ENCODE measurements at regions of chr18 and their contacts with region 1.

Region 1: GRCh38 chr18:13800505-13801259 is 23.3 kb upstream of the MC5R start:
- DNase-seq: peak; percentile 56 to 78
- ATAC-seq: peak; percentile 90 to 96 (median 92)
- H3K4me3 ChIP-seq: peak overlapping the region in 7 of 10 donors; percentile 17 to 41 (median 30)
- H3K27ac ChIP-seq: no peak overlapping the region
- H3K4me1 ChIP-seq: peaks cover 0 to 20% (median 4%) of the 10 kb centered on the region in 9 donors
- H3K27me3 ChIP-seq: peaks cover 0 to 45% (median 4%) of the 10 kb centered on the region in 7 donors
- CTCF ChIP-seq: peak; percentile 22 to 69 (median 56)

Region 2: GRCh38 chr18:13095466-13095865 is 705.2 kb before region 1 on chr18:
- intact Hi-C with region 1: no loop called
- DNase-seq: no peak
- ATAC-seq: no peak
- H3K4me3 ChIP-seq: no peak overlapping the region
- H3K27ac ChIP-seq: no peak overlapping the region
- H3K4me1 ChIP-seq: peaks cover 0 to under 1% (median 0%) of the 10 kb centered on the region in 9 donors
- H3K27me3 ChIP-seq: no peaks in the 10 kb centered on the region
- CTCF ChIP-seq: no peak

Region 3: DNA sequence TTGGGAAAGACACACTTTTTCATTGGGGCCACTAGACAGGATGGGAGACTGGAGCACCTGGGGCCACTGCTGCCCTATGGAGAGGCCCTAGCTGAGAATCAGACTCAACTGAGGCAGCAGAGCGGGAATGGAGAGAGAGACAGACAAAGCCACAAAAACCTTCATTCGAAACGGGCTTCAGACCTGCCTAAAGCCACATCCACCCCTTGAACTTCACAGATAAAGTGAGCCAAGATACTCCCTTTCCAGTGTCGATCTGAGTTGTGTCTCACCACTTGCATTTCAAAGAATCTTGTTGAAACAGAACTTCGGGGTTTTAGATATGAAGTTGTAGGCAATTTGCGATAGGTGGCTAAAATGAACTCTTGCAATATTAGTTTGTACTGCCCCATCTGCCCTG is 593.4 kb before region 1 on chr18:
- intact Hi-C with region 1: loop called in 3 of 10 experiments (anchors 10 kb)
- DNase-seq: no peak
- ATAC-seq: no peak
- H3K4me3 ChIP-seq: no peak overlapping the region
- H3K27ac ChIP-seq: no peak overlapping the region
- H3K4me1 ChIP-seq: peaks cover 0 to 4% (median 0%) of the 10 kb centered on the region in 9 donors
- H3K27me3 ChIP-seq: no peaks in the 10 kb centered on the region
- CTCF ChIP-seq: no peak

Region 4: DNA sequence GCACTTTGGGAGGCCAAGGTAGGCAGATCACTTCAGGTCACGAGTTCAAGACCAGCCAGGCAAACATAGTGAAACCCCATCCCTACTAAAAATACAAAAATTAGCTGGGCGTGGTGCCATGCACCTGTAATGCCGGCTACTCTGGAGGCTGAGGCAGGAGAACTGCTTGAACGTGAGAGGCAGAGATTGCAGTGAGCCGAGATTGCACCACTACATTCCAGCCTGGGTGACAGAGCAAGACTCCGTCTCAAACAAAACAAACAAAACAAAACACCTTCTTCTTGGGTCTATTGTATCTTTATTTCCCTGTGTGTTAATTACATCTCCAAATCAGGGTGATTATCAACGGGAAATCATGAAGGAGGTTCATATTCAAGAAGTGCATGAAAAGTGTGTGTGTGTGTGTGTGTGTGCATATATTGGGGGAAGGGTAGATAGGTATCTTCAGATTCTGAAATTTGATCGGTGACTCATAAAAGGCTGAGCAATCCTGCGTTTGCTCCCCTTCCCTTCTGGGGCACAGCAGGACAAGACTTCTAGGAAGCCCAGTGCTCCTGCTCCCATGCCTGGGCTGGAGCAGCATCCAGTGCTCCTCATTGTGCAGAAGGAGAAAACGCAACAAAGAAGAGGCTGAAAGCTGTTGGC is 49.0 kb after region 1 on chr18:
- intact Hi-C with region 1: loop called in 1 of 10 experiments (anchors 10 kb)
- DNase-seq: no peak
- ATAC-seq: no peak
- H3K4me3 ChIP-seq: no peak overlapping the region
- H3K27ac ChIP-seq: no peak overlapping the region
- H3K4me1 ChIP-seq: no peaks in the 10 kb centered on the region
- H3K27me3 ChIP-seq: no peaks in the 10 kb centered on the region
- CTCF ChIP-seq: no peak

Region 5: GRCh38 chr18:13923221-13923620 is 122.5 kb after region 1 on chr18:
- intact Hi-C with region 1: no loop called
- DNase-seq: no peak
- ATAC-seq: no peak
- H3K4me3 ChIP-seq: no peak overlapping the region
- H3K27ac ChIP-seq: no peak overlapping the region
- H3K4me1 ChIP-seq: no peaks in the 10 kb centered on the region
- H3K27me3 ChIP-seq: peaks cover 0 to 16% (median 5%) of the 10 kb centered on the region in 7 donors
- CTCF ChIP-seq: no peak

Region 6: DNA sequence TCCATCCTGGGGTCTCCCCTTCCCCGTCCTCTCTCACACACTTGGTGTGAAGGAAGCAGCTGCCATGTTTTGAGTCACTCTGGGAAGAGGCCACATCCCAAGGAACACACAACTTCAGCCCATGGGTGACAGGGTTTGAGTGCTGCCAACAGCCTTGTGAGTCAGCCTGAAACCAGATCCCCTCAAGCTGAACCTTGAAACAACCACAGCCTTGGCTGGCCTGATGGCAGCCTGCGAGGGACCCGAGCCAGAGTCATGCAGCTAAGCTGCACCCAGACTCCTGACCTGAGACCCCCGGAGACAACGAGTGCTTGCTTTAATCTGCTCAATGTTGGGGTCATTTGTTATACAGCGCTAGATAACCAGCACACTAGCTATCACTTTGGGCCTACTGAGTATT is 134.0 kb after region 1 on chr18:
- intact Hi-C with region 1: no loop called
- DNase-seq: no peak
- ATAC-seq: no peak
- H3K4me3 ChIP-seq: no peak overlapping the region
- H3K27ac ChIP-seq: no peak overlapping the region
- H3K4me1 ChIP-seq: no peaks in the 10 kb centered on the region
- H3K27me3 ChIP-seq: no peaks in the 10 kb centered on the region
- CTCF ChIP-seq: no peak